Endothelial cell of umbilical vein (primary cell): ENCODE measurements at regions of chr7 and their contacts with region 1.

Region 1: DNA sequence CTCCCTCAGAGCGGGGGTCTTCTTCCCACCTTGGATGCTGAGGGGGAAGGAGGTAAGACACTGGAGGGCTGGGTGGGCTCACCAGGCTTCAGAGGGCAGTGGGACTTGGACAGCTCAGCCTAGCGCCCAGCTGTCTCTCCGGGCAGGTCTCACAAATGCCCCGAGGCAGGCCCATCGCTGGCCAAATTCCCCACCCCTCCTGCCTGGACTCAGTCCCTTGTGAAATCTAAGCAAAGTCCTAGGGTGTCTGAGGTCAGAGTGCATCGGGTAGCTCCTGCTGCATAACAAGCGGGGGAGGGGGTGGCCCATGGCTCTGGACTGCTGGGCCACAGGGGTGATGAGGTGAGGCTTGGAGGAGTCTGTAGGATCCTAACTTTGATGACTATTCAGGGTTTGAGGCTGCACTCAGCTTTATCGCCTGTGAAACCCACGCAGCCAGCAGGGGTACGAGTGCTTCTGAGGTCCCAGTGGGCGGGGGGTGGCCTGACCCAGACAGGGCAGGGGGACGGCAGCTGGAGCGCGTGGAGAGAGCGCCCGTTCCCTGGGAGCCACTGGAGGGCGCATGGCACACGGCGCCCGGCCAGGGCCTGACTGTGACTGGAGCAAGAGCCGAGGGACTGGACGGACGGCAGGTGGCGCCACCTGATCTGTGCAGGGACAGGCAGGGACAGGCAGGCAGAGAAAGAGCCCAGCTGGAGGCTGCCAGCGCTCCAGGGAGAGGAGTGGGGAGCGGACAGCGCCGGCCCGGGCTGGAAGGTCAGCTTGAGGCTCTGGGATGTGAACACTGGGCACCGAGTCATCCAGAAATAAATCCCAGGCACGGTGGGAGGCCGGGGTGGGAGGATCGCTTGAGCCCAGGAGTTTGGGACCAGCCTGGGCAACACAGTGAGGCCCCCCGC is 10.0 kb downstream of the CYP2W1 start:
- DNase-seq: peak; percentile 92
- H3K4me3 ChIP-seq: no peak overlapping the region
- H3K27ac ChIP-seq: no peak overlapping the region
- H3K4me1 ChIP-seq: peaks cover 2% of the 10 kb centered on the region
- H3K27me3 ChIP-seq: no peaks in the 10 kb centered on the region
- CTCF ChIP-seq: peak; percentile 100
- POLR2A ChIP-seq: no peak

Region 2: GRCh38 chr7:1005303-1005702 is 12.3 kb after region 1 on chr7:
- CTCF ChIA-PET with region 1: interaction called, 10 read pairs
- POLR2A ChIA-PET with region 1: no interaction called
- dilution Hi-C with region 1: no loop called
- intact Hi-C with region 1: no loop called
- DNase-seq: no peak
- H3K4me3 ChIP-seq: no peak overlapping the region
- H3K27ac ChIP-seq: no peak overlapping the region
- H3K4me1 ChIP-seq: no peaks in the 10 kb centered on the region
- H3K27me3 ChIP-seq: no peaks in the 10 kb centered on the region
- CTCF ChIP-seq: no peak
- POLR2A ChIP-seq: no peak

Region 3: GRCh38 chr7:1044191-1045068 is 51.5 kb after region 1 on chr7 and contains the start of gene GPR146:
- CTCF ChIA-PET with region 1: interaction called, 30 read pairs
- POLR2A ChIA-PET with region 1: no interaction called
- dilution Hi-C with region 1: no loop called
- intact Hi-C with region 1: loop called (anchors 1 kb)
- DNase-seq: peak; percentile 95
- H3K4me3 ChIP-seq: peak within 1 kb of the TSS; percentile 22 to 67 (median 57)
- H3K27ac ChIP-seq: peak within 1 kb of the TSS; percentile 54
- H3K4me1 ChIP-seq: peaks cover 24% of the 10 kb centered on the region
- H3K27me3 ChIP-seq: no peaks in the 10 kb centered on the region
- CTCF ChIP-seq: peak; percentile 58 to 82
- POLR2A ChIP-seq: peak; percentile 33
- total RNA-seq, gene GPR146: 11.7 and 18.5 TPM in 2 replicates

Region 4: DNA sequence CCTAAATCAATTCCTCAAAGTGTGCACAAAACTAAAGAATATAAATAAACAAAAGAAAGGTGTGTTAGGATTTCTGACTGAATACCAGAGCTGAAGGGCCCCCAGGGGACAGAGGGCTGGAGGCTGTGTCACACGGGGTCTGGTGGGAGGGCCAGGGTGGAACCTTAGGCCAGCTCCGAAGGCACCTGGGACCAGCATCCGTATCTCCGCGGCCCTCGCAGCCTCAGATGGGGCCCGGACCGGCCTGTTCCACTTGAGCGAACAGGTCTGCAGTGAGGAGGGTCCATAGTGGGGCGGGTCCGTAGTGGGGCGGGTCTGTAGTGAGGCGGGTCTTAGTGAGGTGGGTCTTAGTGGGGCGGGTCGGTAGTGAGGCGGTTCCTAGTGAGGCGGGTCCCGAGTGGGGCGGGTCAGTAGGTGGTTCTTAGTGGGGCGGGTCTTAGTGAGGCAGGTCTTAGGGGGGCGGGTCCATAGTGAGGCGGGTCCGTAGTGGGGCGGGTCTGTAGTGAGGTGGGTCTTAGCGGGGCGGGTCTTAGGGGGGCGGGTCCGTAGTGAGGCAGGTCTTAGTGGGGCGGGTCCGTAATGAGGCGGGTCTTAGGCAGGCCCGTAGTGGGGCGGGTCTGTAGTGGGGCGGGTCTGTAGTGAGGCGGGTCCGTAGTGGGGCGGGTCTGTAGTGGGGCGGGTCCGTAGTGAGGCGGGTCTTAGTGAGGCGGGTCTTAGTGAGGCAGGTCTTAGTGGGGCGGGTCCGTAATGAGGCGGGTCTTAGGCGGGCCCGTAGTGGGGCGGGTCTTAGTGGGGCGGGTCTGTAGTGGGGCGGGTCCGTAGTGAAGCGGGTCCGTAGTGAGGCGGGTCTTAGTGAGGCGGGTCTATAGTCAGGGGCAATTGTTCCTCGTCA is 66.5 kb after region 1 on chr7:
- CTCF ChIA-PET with region 1: interaction called, 459 read pairs
- POLR2A ChIA-PET with region 1: interaction called, 3 read pairs
- dilution Hi-C with region 1: no loop called
- intact Hi-C with region 1: no loop called
- DNase-seq: peak; percentile 64
- H3K4me3 ChIP-seq: no peak overlapping the region
- H3K27ac ChIP-seq: peak overlapping the region; percentile 49
- H3K4me1 ChIP-seq: peaks cover 31% of the 10 kb centered on the region
- H3K27me3 ChIP-seq: no peaks in the 10 kb centered on the region
- CTCF ChIP-seq: no peak
- POLR2A ChIP-seq: no peak

Region 5: GRCh38 chr7:1086588-1087464 is 93.9 kb after region 1 on chr7:
- CTCF ChIA-PET with region 1: interaction called, 16 read pairs
- POLR2A ChIA-PET with region 1: no interaction called
- dilution Hi-C with region 1: no loop called
- intact Hi-C with region 1: no loop called
- DNase-seq: peak; percentile 73
- H3K4me3 ChIP-seq: peak overlapping the region; percentile 7 to 46 (median 36)
- H3K27ac ChIP-seq: peak overlapping the region; percentile 54
- H3K4me1 ChIP-seq: peaks cover 21% of the 10 kb centered on the region
- H3K27me3 ChIP-seq: no peaks in the 10 kb centered on the region
- CTCF ChIP-seq: peak; percentile 85 to 90
- POLR2A ChIP-seq: no peak

Region 6: DNA sequence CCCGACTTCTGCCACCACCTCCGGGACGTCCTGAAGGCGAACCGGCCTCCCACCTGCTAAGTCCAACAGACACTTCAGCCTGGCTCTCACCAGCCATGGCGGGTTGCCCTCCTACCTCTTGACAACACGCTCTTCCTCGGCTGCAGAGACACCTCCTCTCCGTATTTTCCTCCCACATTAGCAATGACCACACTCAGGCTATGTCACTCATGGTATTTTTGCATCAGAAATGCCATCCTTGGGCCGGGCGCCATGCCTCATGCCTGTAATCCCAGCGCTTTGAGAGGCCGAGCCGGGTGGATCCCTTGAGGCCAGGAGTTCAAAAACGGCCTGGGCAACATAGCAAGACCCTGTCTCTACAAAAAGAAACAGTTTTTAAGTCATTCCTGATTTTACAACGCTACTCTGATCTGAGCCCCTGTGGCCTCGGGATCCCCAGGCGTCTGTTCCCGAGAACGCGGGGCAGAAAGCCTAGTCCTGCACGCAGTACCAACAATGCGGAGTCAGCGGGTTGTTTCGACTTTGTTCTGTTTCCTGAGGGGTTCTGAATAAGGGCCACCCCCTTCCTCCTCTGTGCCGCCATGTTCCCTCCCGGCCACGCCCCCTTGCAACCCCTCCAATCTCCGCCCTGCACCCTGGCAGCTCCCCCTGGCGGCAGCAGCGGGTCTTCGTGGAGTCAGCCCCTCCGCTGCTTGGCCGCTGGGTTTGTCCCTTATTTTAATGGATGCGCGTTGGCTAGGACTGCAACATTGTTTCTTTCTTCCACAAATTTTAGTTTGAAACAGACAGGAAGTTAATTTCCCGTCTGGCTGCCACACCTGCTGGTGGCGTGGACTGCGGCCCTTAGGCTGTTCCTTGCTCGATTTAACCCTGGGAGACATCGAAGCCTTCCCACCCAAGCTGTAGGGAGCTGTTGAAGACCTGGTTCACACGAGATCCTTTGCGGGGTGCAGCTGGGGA is 176.7 kb after region 1 on chr7:
- CTCF ChIA-PET with region 1: interaction called, 4 read pairs
- POLR2A ChIA-PET with region 1: no interaction called
- dilution Hi-C with region 1: no loop called
- intact Hi-C with region 1: loop called (anchors 1 kb)
- DNase-seq: peak; percentile 90
- H3K4me3 ChIP-seq: peak overlapping the region in 2 of 3 experiments; percentile 21 to 47
- H3K27ac ChIP-seq: peak overlapping the region; percentile 16
- H3K4me1 ChIP-seq: peaks cover 3% of the 10 kb centered on the region
- H3K27me3 ChIP-seq: no peaks in the 10 kb centered on the region
- CTCF ChIP-seq: peak; percentile 98 to 99
- POLR2A ChIP-seq: peak; percentile 84

Region 7: GRCh38 chr7:1181640-1182039 is 188.7 kb after region 1 on chr7:
- CTCF ChIA-PET with region 1: interaction called, 32 read pairs
- POLR2A ChIA-PET with region 1: no interaction called
- dilution Hi-C with region 1: no loop called
- intact Hi-C with region 1: loop called (anchors 1 kb)
- DNase-seq: peak; percentile 44
- H3K4me3 ChIP-seq: no peak overlapping the region
- H3K27ac ChIP-seq: peak overlapping the region; percentile 46
- H3K4me1 ChIP-seq: peaks cover 15% of the 10 kb centered on the region
- H3K27me3 ChIP-seq: peaks cover 0 to 3% of the 10 kb centered on the region in 2 experiments
- CTCF ChIP-seq: no peak
- POLR2A ChIP-seq: no peak